ENCODE measurements at regions of chr4 and their contacts with region 1.

Region 1: GRCh38 chr4:17810260-17811077 is at the starts of genes DCAF16 and NCAPG:
- DNase-seq: peak; percentile 99 to 100 (median 100)
- ATAC-seq: peak; percentile 100
- H3K4me3 ChIP-seq: peak within 1 kb of the TSS; percentile 72 to 90 (median 77)
- H3K27ac ChIP-seq: peak within 1 kb of the TSS; percentile 86 to 98 (median 94)
- H3K4me1 ChIP-seq: peaks cover 5 to 61% (median 39%) of the 10 kb centered on the region in 12 donors
- H3K27me3 ChIP-seq: no peaks in the 10 kb centered on the region
- CTCF ChIP-seq: no peak
- POLR2A ChIP-seq: peak; percentile 75 to 94
- total RNA-seq, gene DCAF16: 14.2 to 23.5 (median 19.1) TPM
- total RNA-seq, gene NCAPG: 0.21 to 5.4 (median 0.86) TPM in 8 of 9 donors, not detected in the other

Region 2: GRCh38 chr4:17544205-17544604 is 266.3 kb before region 1 on chr4:
- intact Hi-C with region 1: loop called in 7 of 10 experiments (anchors 2 to 10 kb)
- DNase-seq: no peak
- ATAC-seq: no peak
- H3K4me3 ChIP-seq: no peak overlapping the region
- H3K27ac ChIP-seq: no peak overlapping the region
- H3K4me1 ChIP-seq: peaks cover 0 to 7% (median 0%) of the 10 kb centered on the region in 12 donors
- H3K27me3 ChIP-seq: no peaks in the 10 kb centered on the region
- CTCF ChIP-seq: no peak
- POLR2A ChIP-seq: no peak

Region 3: DNA sequence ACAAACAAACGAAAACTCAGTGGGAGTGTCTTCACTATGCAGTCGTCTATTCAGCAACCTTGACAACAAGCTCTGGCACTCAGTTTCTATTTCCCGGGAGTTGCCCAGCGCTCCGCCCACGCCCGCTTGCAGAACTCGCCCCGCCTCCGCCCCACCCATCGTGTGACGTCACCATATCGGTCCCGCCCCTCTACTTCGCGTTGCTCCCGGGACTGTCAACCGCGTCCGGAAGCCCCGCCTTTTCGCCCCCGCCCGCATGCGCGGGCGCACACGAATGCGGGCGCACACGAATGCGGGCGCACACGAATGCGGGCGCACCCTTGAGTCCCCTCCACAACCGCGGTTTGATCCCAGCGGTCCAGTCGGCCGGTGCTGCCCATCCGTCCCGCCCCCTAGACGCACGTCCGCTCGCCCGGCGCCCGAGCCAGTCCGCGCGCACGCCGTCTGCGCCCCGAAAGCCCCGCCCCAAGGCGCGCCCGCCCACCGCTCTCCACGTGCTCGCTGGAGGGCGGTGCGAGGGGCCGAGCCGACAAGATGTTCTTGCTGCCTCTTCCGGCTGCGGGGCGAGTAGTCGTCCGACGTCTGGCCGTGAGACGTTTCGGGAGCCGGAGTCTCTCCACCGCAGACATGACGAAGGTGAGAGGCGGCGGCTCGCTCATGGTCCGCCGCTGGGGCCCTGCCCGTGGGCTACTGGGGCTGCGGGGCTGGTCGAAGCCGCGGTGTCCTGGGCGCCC is 233.4 kb before region 1 on chr4 and contains the start of gene LAP3:
- intact Hi-C with region 1: loop called in 3 of 10 experiments (anchors 1 to 10 kb)
- DNase-seq: peak; percentile 97 to 99 (median 98)
- ATAC-seq: peak; percentile 93 to 99 (median 96)
- H3K4me3 ChIP-seq: peak within 1 kb of the TSS; percentile 47 to 96 (median 82)
- H3K27ac ChIP-seq: peak within 1 kb of the TSS; percentile 89 to 96 (median 94)
- H3K4me1 ChIP-seq: peaks cover 0 to 46% (median 34%) of the 10 kb centered on the region in 12 donors
- H3K27me3 ChIP-seq: no peaks in the 10 kb centered on the region
- CTCF ChIP-seq: peak in 1 of 12 donors; percentile 14
- POLR2A ChIP-seq: peak; percentile 21 to 94
- total RNA-seq, gene LAP3: 52.7 to 281 (median 66.1) TPM

Region 4: DNA sequence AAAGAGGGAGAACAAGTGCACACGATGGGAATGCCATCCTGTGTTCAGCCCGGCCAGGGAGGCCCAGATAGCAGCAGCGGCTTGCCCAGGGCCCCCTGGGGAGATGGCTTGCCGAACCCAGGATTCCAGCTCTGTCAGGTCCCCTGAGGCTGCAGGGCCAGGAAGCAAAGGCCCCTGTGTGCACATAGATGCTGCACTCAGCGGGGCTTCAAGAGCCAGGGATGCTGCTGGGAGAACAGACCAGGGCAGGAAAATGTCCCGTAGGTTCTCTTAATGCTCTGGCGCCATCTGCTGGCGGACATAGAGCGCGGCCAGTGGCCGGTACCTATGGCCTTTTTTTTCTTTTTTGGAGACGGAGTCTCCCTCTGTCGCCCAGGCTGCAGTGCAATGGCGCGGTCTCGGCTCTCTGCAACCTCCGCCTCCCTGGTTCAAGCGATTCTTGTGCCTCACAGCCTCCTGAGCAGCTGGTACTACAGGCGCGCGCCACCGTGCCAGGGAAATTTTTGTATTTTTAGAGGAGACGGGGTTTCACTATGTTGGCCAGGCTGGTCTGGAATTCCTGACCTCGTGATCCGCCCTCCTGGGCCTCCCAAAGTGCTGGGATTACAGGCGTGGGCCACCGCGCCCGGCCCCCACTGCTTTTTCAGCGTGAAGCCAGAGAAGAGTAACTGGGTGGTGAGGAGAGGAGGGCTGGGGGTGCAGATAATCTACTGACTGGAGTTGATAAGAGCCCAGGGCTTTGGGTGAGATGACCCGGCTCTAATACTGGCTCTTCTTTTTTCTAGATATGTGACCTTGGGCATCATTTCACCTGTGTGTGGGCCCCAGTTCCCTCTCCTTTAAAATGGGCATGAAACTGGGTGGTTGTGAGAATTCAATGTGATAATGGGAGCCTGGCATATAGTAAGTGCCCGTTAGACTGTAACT is 173.5 kb before region 1 on chr4:
- intact Hi-C with region 1: loop called in 2 of 10 experiments (anchors 10 kb)
- DNase-seq: peak; percentile 64 to 84 (median 75)
- ATAC-seq: peak; percentile 60 to 93 (median 84)
- H3K4me3 ChIP-seq: no peak overlapping the region
- H3K27ac ChIP-seq: no peak overlapping the region
- H3K4me1 ChIP-seq: peaks cover 0 to 5% (median 0%) of the 10 kb centered on the region in 12 donors
- H3K27me3 ChIP-seq: no peaks in the 10 kb centered on the region
- CTCF ChIP-seq: peak; percentile 84 to 96 (median 90)
- POLR2A ChIP-seq: no peak

Region 5: GRCh38 chr4:18366892-18367291 is 556.4 kb after region 1 on chr4:
- intact Hi-C with region 1: loop called in 8 of 10 experiments (anchors 5 to 10 kb)
- DNase-seq: no peak
- ATAC-seq: peak in 2 of 4 donors; percentile 42 to 47
- H3K4me3 ChIP-seq: no peak overlapping the region
- H3K27ac ChIP-seq: no peak overlapping the region
- H3K4me1 ChIP-seq: no peaks in the 10 kb centered on the region
- H3K27me3 ChIP-seq: no peaks in the 10 kb centered on the region
- CTCF ChIP-seq: peak; percentile 17 to 53 (median 36)
- POLR2A ChIP-seq: no peak

Measured in heart left ventricle (tissue), 16 donors.